ENCODE measurements at regions of chr2 and their contacts with region 1.

Region 1: GRCh38 chr2:69163109-69163508 is 150.1 kb downstream of the ANTXR1 start:
- DNase-seq: peak in 1 of 2 donors; percentile 52
- H3K4me3 ChIP-seq: no peak overlapping the region
- H3K27ac ChIP-seq: peak overlapping the region; percentile 50 to 68
- H3K4me1 ChIP-seq: peaks cover 0 to 79% (median 60%) of the 10 kb centered on the region in 4 donors
- H3K27me3 ChIP-seq: no peaks in the 10 kb centered on the region
- CTCF ChIP-seq: no peak

Region 2: DNA sequence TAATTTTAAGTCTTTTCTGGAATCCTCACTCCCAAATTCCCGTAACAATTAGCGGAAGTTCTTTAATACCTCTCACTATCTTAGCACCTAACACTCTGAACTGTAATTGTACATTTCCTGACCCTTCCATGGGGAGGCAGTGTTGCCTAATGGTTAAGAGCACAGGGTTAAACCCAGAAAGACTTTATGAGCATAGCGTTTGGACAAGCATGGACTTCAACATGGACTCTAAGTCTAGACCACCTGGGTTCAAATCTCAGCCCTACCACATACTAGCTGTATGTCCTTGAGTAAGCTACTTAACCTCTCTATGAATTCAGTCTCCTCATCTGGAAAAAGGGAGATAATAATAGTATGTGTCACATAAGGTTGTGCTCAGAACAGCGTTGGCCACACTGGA is 137.1 kb before region 1 on chr2:
- intact Hi-C with region 1: loop called (anchors 10 kb)
- DNase-seq: no peak
- H3K4me3 ChIP-seq: no peak overlapping the region
- H3K27ac ChIP-seq: no peak overlapping the region
- H3K4me1 ChIP-seq: peaks cover 0 to 56% (median 17%) of the 10 kb centered on the region in 4 donors
- H3K27me3 ChIP-seq: no peaks in the 10 kb centered on the region
- CTCF ChIP-seq: peak; percentile 35 to 65

Region 3: DNA sequence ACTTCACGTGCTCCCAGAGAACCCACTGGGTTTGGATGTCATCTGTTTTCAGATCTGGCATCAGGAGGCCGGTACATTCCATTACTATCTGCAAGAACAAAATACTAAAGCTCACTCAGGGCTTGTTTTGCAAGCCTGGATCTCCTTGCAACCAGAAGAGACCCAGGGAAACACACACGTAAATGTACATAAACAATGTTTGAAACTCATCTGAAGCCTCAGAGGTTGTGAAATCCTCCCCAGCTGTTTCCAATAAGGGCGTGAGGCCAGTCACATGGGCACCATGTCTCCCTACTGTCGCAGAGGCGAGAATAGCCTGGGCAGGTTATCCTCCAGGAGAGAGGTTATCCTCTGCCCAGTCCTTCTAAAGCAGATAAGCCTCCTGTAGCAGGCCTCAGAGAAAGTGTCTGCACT is 37.0 kb after region 1 on chr2:
- intact Hi-C with region 1: no loop called
- DNase-seq: peak; percentile 75 to 81
- H3K4me3 ChIP-seq: no peak overlapping the region
- H3K27ac ChIP-seq: peak overlapping the region; percentile 36 to 58
- H3K4me1 ChIP-seq: peaks cover 0 to 59% (median 15%) of the 10 kb centered on the region in 4 donors
- H3K27me3 ChIP-seq: no peaks in the 10 kb centered on the region
- CTCF ChIP-seq: no peak

Measured in tibial artery (tissue), 4 donors.